Activated CD4-positive, alpha-beta memory T cell treated with anti-CD3 and anti-CD28 coated beads for 36 hours (primary cell): ENCODE measurements at regions of chr11 and their contacts with region 1.

Region 1: DNA sequence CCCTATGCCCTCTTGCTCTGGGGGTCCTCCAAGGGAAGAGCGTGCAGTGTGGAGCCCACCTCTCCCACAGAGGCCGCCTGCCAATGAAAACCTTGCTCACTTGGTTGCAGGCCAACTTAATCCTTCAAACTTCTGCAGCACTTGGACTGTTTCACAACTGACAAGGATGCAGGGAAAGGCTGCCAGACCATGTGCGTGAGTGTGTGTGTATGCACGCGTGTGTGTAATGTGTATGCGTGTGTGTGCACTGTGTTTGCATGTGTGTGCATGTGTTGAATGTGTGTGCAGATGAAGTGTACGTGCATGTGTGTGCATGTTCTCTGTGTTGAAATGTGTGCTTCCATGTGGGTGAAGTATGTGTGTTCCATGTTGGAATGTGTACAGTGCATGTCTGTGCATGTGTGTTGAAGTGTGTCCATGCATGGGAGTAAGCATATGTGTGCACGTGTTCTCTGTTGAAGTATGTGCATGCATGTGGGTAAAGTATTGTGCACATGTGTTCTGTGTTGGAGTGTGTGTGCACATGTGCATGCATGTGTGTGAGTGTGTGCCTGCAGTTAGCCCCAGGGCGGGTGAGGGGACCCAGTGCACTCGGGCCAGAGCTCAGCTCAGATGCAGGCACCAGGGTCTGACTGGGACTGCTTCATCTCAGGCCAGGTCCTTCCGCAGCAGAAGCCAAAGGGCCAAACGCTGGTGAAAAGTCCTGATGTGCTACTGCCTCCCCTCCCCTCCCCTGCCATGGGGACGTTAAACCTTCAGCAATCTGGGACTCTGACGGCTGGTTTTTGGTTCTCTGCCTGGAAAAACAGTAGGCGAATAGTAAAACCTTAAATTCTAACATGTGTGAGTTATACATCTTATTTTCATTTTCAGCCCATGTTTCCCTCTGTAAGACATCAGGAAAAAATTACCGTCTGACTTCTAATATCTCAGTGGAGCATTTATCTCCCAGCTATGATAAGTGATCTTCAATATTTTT is 72.0 kb downstream of the FLI1 start:
- DNase-seq: no peak
- H3K4me3 Mint-ChIP-seq: no peak overlapping the region
- H3K27ac Mint-ChIP-seq: no peak overlapping the region
- H3K4me1 Mint-ChIP-seq: peaks cover 16% of the 10 kb centered on the region
- H3K27me3 Mint-ChIP-seq: no peaks in the 10 kb centered on the region

Region 2: DNA sequence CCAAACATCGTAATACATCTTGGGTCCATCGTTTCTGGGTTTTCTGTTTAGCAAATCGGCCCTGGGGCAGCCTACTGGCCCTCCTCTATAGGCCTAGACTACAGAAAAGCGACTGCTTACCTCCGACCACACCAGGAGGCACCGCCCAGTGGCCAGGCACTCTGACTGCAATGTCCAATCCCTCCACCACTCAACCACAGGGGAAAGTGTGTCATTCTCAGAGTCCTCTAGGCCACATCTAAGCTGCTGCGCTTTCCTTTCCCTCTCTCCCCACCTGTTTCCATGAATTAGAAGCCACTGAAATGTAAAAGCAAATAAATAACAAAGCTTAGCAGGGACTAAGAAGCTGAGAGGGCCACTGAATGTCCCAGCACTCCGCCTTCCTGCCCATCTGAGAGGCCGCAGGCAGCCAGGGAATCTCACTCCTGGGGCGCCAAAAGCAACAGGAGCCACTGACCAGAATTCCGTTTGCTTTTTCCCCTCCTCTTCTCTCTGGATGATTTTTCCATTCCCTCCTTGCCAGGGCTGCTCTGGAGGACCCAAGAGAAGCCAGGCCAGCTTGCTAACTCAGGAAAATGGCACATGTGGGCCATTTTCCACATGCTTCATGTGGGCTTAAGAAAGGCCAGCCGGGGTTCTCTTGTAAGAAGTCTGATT is 122.1 kb before region 1 on chr11:
- CTCF ChIA-PET with region 1: no interaction called
- POLR2A ChIA-PET with region 1: no interaction called
- intact Hi-C with region 1: no loop called
- DNase-seq: no peak
- H3K4me3 Mint-ChIP-seq: no peak overlapping the region
- H3K27ac Mint-ChIP-seq: no peak overlapping the region
- H3K4me1 Mint-ChIP-seq: peaks cover 4% of the 10 kb centered on the region
- H3K27me3 Mint-ChIP-seq: no peaks in the 10 kb centered on the region

Region 3: GRCh38 chr11:128776424-128777284 is 10.8 kb after region 1 on chr11:
- CTCF ChIA-PET with region 1: interaction called, 15 read pairs
- POLR2A ChIA-PET with region 1: no interaction called
- intact Hi-C with region 1: no loop called
- DNase-seq: peak; percentile 48
- H3K4me3 Mint-ChIP-seq: no peak overlapping the region
- H3K27ac Mint-ChIP-seq: peak overlapping the region; percentile 53
- H3K4me1 Mint-ChIP-seq: peaks cover 41% of the 10 kb centered on the region
- H3K27me3 Mint-ChIP-seq: no peaks in the 10 kb centered on the region

Region 4: DNA sequence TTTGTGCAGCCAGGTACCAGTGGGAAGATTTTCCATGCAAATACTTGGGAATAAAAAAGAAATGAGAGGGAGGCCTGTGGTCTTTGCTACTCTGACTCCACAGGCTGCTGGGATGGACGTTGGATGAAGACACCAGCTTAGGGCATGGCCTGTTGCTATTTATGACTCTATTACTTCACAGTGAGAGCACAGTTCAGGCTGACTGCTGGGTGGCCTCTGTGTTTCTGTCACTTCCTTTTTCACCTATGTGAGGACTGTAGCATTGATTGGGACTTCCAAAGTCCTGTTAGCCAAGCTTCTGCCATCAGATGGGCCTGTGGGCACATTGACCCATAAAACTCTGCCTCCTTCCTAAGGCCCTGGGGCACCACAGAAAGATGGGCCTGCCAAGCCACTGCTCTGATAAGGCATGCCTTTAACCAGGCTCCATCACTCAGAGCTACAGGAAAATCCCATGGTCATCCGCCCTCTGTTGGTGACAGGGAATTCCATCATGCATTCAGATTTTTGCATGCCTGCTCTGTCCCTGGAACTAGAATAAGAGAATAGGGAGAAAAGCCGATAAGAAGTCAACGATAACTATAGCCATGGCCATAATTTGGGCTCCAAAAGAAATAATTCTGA is 36.6 kb after region 1 on chr11:
- CTCF ChIA-PET with region 1: no interaction called
- POLR2A ChIA-PET with region 1: no interaction called
- intact Hi-C with region 1: no loop called
- DNase-seq: no peak
- H3K4me3 Mint-ChIP-seq: no peak overlapping the region
- H3K27ac Mint-ChIP-seq: peak overlapping the region; percentile 49
- H3K4me1 Mint-ChIP-seq: peaks cover 31% of the 10 kb centered on the region
- H3K27me3 Mint-ChIP-seq: no peaks in the 10 kb centered on the region

Region 5: DNA sequence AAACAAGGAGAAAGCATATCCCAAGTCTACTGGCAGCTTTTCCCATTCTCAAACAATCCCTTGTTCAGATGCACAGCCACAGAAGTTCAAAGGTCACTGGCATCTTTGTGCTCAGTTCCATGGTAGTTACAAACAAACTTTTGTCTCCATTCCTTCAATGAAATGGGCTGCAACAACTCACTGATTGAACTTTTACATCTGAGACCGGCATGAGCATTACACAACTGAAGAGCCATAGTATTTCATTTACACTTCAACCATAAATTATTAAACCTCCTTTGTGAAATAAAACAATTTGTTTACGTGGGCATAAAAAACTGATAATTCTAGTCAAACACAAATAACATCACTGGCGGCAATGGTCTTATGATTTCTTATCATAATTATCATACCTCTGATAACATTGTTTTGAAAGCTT is 494.1 kb after region 1 on chr11:
- CTCF ChIA-PET with region 1: no interaction called
- POLR2A ChIA-PET with region 1: no interaction called
- intact Hi-C with region 1: no loop called
- DNase-seq: no peak
- H3K4me3 Mint-ChIP-seq: no peak overlapping the region
- H3K27ac Mint-ChIP-seq: no peak overlapping the region
- H3K4me1 Mint-ChIP-seq: peaks cover under 1% of the 10 kb centered on the region
- H3K27me3 Mint-ChIP-seq: peaks cover 2% of the 10 kb centered on the region